ENCODE measurements at regions of chr21 and their contacts with region 1.

Region 1: DNA sequence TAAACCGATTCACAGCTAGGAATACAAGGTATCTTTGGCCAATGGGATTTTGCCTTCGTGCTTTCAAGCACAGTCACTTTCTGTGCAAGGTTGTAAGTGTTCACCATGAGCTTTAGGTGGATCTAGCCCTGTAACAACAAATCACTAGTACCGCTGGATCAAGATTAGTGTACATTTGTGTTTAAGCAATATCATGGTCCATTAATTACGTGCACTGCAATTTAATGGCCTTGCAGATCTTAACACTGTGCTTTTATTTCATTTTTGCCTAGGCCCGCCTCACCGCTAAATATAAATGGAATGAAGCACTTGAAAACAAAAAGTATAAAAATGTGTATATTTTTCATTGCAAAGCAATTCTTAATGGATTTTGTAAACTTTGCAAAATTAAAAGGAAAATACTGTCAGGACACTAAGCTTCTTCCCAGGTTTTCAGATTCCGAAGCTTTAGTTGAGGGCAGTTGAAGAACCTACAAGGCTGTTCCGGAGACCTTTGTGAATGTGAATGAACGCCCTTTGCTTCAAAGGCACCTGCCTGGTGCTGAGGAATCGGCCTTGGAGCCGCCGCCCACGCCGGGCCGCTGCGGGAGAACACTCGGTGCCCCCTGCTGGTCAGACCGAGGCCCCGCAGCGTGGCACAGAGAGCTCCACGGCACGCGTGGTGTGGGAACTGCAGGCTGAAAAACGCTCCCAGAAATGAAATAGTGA is 460.9 kb downstream of the DSCAM start:
- DNase-seq: no peak
- ATAC-seq: 0 out of 2 replicates have a peak, but pooled peaks have one; percentile 68
- H3K4me3 ChIP-seq: no peak overlapping the region
- H3K27ac ChIP-seq: no peak overlapping the region
- H3K4me1 ChIP-seq: no peaks in the 10 kb centered on the region
- H3K27me3 ChIP-seq: no peaks in the 10 kb centered on the region; the same call in none of the 2 replicates
- CTCF ChIP-seq: peak; percentile 88

Region 2: DNA sequence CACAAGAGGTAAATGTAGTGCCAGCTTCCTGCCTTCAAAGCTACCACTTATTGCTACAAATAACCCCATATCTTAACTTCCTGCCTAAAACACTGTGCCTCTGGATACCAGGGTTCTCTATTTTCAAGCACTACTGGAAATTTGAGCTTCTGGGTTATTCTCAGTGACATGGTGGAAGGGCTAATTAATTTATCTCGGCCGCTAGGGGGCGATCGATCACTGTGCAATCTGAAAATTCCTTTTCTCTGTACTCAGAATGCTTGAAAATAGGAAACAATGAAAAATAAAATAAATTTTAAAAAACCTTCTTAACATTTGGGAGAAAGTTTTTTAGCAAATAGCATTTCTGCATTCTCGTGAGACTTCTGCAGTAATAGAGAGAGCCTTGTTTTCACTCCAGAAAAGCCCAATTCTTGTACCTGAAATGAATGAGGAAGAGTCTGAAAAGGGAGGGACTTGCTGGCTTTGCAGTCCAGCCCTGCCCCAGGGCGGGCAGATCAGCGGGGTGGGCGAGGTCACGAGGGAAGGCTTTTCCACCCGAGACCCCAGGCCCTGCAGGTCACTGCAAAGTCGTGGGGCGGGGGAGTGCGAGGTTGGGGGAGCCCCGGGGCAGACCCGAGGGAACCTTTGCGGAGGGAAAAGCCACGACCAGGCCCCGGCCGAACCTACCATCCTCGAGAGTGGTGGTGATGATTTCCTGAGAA is 242.1 kb before region 1 on chr21:
- CTCF ChIA-PET with region 1: interaction called, 3 read pairs
- POLR2A ChIA-PET with region 1: no interaction called
- in situ Hi-C with region 1: no loop called
- intact Hi-C with region 1: loop called (anchors 2 kb)
- DNase-seq: peak; percentile 8
- ATAC-seq: peak; percentile 73
- H3K4me3 ChIP-seq: no peak overlapping the region
- H3K27ac ChIP-seq: no peak overlapping the region
- H3K4me1 ChIP-seq: no peaks in the 10 kb centered on the region; the same call in 1 of the 2 replicates
- H3K27me3 ChIP-seq: no peaks in the 10 kb centered on the region
- CTCF ChIP-seq: peak; percentile 78

Region 3: DNA sequence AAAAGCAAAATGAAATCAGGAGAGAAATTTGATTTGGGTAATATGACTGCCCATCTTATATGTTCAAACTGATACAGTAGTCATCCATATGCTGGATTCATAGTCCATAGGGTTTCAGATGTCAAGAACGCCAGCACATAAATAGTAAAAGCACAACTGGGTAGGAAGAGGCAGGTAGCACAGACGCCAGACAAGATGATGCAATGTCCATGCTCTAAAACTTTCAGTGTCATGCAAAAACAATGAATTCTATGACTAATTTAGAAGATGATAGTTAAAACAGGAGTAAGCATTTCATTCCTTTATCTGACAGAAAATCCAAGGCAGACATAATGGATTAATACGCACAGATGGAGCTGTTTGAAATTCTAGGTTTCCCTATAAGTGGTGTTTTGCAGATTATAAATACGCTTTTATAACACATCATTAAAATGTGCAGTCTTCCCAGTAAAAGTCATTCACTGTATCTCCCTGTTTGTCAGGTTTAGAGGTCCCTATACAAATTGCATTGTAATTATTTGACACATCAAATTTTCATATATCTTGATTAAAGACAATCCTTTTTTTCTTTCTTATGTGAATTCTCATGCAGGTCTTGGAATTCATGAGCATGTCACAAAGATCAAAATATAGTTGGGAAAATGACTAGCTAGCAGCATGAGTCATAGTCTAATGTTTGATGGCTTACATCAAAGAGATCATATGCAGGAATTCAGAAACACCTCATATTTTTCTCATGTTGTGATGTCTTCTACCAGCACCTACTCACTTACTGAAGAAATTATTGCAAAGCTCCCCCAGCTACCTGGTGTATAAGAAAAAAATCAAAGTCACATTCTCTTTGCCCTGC is 321.0 kb after region 1 on chr21:
- CTCF ChIA-PET with region 1: no interaction called
- POLR2A ChIA-PET with region 1: no interaction called
- in situ Hi-C with region 1: no loop called
- intact Hi-C with region 1: no loop called
- DNase-seq: no peak
- ATAC-seq: no peak
- H3K4me3 ChIP-seq: no peak overlapping the region
- H3K27ac ChIP-seq: no peak overlapping the region
- H3K4me1 ChIP-seq: no peaks in the 10 kb centered on the region
- H3K27me3 ChIP-seq: no peaks in the 10 kb centered on the region
- CTCF ChIP-seq: no peak

Region 4: DNA sequence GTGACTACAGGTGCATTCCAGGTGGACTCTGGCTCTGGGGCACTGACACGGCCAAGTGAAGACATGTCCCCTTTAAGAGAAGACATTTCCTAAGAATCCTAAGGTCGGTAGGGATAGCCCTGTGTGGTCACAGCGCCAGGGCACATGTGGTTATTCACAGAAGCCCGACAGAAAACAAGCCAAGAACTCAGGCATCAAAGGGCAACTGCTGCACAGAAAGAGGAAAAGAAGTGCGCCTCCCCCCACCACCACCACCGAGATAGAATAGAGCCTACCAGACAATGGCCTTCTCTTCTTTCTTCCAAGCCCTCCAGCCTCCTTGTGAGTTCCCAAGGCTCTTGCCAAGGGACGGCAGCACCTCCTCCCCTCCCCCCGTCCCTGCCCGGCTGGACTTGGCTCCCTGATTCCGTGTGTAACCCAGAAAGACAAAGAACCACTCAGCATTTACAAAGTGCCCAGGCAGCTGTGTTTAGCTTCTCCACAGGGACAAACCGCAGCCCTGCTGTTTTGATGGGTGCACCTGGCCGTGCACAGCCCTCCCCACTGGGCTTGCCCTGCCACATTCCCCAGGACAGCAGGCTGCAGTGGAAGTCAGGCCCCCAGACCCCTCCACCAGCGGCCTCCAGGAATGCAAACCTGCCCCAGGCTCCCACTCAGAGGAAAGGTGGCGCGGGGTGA is 1091.7 kb after region 1 on chr21:
- CTCF ChIA-PET with region 1: no interaction called
- POLR2A ChIA-PET with region 1: no interaction called
- in situ Hi-C with region 1: no loop called
- intact Hi-C with region 1: no loop called
- DNase-seq: no peak
- ATAC-seq: peak; percentile 45
- H3K4me3 ChIP-seq: no peak overlapping the region
- H3K27ac ChIP-seq: peak overlapping the region; percentile 48
- H3K4me1 ChIP-seq: peaks cover 17% of the 10 kb centered on the region
- H3K27me3 ChIP-seq: no peaks in the 10 kb centered on the region
- CTCF ChIP-seq: no peak